ENCODE measurements at regions of chr7 and their contacts with region 1.

Region 1: GRCh38 chr7:87886875-87887274 is 10.6 kb downstream of the DBF4 start:
- DNase-seq: no peak
- H3K4me3 ChIP-seq: no peak overlapping the region
- H3K4me3 Mint-ChIP-seq: no peak overlapping the region
- H3K27ac Mint-ChIP-seq: no peak overlapping the region
- H3K4me1 ChIP-seq: no peaks in the 10 kb centered on the region
- H3K4me1 Mint-ChIP-seq: peaks cover 6% of the 10 kb centered on the region
- H3K27me3 ChIP-seq: no peaks in the 10 kb centered on the region
- H3K27me3 Mint-ChIP-seq: no peaks in the 10 kb centered on the region
- CTCF ChIP-seq: peak; percentile 33 to 55

Region 2: DNA sequence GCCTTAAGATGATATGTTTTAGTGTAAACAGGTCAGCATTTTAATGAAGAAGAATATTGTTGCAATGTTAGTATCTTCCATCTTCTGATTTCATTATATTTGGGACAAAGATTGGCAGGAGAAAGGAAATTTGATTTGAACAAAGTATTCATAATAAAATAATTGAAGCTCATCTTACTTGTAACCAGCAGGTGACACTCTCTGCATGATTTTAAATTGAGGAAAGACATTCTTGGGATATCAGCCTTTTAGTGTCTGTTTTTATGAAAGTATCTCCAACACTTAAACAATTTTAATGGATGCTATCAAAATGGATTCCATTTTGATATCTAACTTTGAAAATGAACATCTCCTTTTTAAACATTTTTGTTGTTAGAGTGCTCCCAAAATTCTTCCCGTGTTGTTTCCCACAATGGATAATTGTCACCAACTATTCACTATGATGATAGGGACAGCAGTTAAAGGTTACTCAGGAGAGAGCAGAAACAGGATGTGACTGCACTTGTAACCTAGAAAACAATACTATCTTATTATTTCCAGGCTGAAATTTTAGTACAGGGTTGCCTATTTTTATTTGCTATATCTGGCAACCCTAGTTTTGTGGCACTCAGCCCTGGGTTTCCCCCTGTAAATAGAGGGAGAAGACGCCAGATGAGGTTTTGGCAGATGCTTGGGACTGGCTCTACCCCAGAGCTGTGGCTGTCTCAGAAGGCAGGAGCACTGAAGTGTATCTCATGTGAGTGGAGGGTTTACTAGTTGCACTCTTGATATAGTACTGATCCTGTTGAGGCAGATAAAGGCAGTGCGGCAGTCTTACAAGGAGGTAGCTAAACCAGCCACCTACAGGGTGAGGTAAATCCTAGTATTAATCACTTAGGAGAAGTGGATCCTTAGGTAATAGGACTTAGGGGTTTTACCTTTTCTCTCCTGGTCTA is 380.4 kb before region 1 on chr7:
- CTCF ChIA-PET with region 1: no interaction called
- POLR2A ChIA-PET with region 1: no interaction called
- intact Hi-C with region 1: loop called (anchors 2 kb)
- DNase-seq: no peak
- H3K4me3 ChIP-seq: no peak overlapping the region
- H3K4me3 Mint-ChIP-seq: no peak overlapping the region
- H3K27ac Mint-ChIP-seq: no peak overlapping the region
- H3K4me1 ChIP-seq: no peaks in the 10 kb centered on the region
- H3K4me1 Mint-ChIP-seq: no peaks in the 10 kb centered on the region
- H3K27me3 ChIP-seq: no peaks in the 10 kb centered on the region
- H3K27me3 Mint-ChIP-seq: no peaks in the 10 kb centered on the region
- CTCF ChIP-seq: peak; percentile 11 to 42

Region 3: GRCh38 chr7:87628780-87629569 is 257.9 kb before region 1 on chr7:
- CTCF ChIA-PET with region 1: no interaction called
- POLR2A ChIA-PET with region 1: no interaction called
- intact Hi-C with region 1: loop called (anchors 2 kb)
- DNase-seq: peak; percentile 47 to 50
- H3K4me3 ChIP-seq: peak overlapping the region; percentile 71
- H3K4me3 Mint-ChIP-seq: peak overlapping the region; percentile 86
- H3K27ac Mint-ChIP-seq: no peak overlapping the region
- H3K4me1 ChIP-seq: no peaks in the 10 kb centered on the region
- H3K4me1 Mint-ChIP-seq: peaks cover 6% of the 10 kb centered on the region
- H3K27me3 ChIP-seq: no peaks in the 10 kb centered on the region
- H3K27me3 Mint-ChIP-seq: peaks cover 4% of the 10 kb centered on the region
- CTCF ChIP-seq: no peak

Region 4: DNA sequence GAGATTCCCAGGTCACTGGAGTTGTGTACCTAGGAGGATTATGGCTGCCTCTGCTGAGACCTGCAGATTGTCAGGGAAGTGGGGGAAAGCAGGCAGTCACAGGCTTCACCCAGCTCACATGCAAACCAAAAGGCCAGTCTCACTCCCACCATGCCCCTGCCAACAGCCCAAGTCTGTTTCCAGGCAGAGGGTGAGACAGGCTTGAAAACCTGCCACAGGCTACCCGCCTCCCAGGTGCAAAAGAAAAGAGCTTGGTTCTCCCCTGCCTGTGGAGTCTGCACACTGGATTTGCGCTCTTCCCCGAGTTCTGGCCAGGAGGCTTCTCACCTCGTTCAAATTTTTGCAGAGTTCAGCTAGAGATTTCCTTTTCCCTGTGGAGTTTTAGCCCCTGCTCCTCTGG is 139.2 kb before region 1 on chr7:
- CTCF ChIA-PET with region 1: no interaction called
- POLR2A ChIA-PET with region 1: no interaction called
- intact Hi-C with region 1: loop called (anchors 1 kb)
- DNase-seq: no peak
- H3K4me3 ChIP-seq: no peak overlapping the region
- H3K4me3 Mint-ChIP-seq: no peak overlapping the region
- H3K27ac Mint-ChIP-seq: no peak overlapping the region
- H3K4me1 ChIP-seq: no peaks in the 10 kb centered on the region
- H3K4me1 Mint-ChIP-seq: no peaks in the 10 kb centered on the region
- H3K27me3 ChIP-seq: no peaks in the 10 kb centered on the region
- H3K27me3 Mint-ChIP-seq: no peaks in the 10 kb centered on the region
- CTCF ChIP-seq: no peak

Region 5: GRCh38 chr7:87797798-87798403 is 89.0 kb before region 1 on chr7:
- CTCF ChIA-PET with region 1: interaction called, 3 read pairs
- POLR2A ChIA-PET with region 1: no interaction called
- intact Hi-C with region 1: loop called (anchors 1 kb)
- DNase-seq: peak in 1 of 2 experiments; percentile 45
- H3K4me3 ChIP-seq: no peak overlapping the region
- H3K4me3 Mint-ChIP-seq: no peak overlapping the region
- H3K27ac Mint-ChIP-seq: no peak overlapping the region
- H3K4me1 ChIP-seq: no peaks in the 10 kb centered on the region
- H3K4me1 Mint-ChIP-seq: no peaks in the 10 kb centered on the region
- H3K27me3 ChIP-seq: no peaks in the 10 kb centered on the region
- H3K27me3 Mint-ChIP-seq: peaks cover 3% of the 10 kb centered on the region
- CTCF ChIP-seq: peak; percentile 61 to 66

Region 6: DNA sequence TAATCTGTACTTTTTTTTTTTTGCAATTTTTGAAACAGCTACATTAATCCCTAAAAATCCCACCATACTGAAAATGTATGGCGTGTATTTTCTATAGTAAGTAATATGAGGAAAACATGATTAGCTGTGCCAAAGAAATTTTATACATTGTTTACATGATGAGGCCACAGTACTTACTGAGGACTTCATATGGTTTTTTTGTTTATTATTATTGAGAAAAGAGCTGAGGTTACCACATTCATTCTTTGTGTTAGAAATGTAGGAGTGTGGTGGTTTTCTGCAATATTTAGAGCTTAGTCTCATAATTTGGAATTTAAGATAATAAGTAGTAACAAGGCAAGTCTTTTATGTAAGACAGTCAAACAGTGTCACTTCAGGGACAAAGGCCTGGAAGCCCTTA is 55.8 kb before region 1 on chr7:
- CTCF ChIA-PET with region 1: no interaction called
- POLR2A ChIA-PET with region 1: no interaction called
- intact Hi-C with region 1: no loop called
- DNase-seq: no peak
- H3K4me3 ChIP-seq: no peak overlapping the region
- H3K4me3 Mint-ChIP-seq: no peak overlapping the region
- H3K27ac Mint-ChIP-seq: no peak overlapping the region
- H3K4me1 ChIP-seq: no peaks in the 10 kb centered on the region
- H3K4me1 Mint-ChIP-seq: no peaks in the 10 kb centered on the region
- H3K27me3 ChIP-seq: no peaks in the 10 kb centered on the region
- H3K27me3 Mint-ChIP-seq: no peaks in the 10 kb centered on the region
- CTCF ChIP-seq: no peak

Region 7: GRCh38 chr7:88111136-88111743 is 224.4 kb after region 1 on chr7:
- CTCF ChIA-PET with region 1: no interaction called
- POLR2A ChIA-PET with region 1: no interaction called
- intact Hi-C with region 1: loop called (anchors 5 kb)
- DNase-seq: peak in 1 of 2 experiments; percentile 24
- H3K4me3 ChIP-seq: no peak overlapping the region
- H3K4me3 Mint-ChIP-seq: no peak overlapping the region
- H3K27ac Mint-ChIP-seq: no peak overlapping the region
- H3K4me1 ChIP-seq: no peaks in the 10 kb centered on the region
- H3K4me1 Mint-ChIP-seq: no peaks in the 10 kb centered on the region
- H3K27me3 ChIP-seq: no peaks in the 10 kb centered on the region
- H3K27me3 Mint-ChIP-seq: no peaks in the 10 kb centered on the region
- CTCF ChIP-seq: peak; percentile 34 to 63